Naive thymus-derived CD8-positive, alpha-beta T cell (primary cell): ENCODE measurements at regions of chr12 and their contacts with region 1.

Region 1: GRCh38 chr12:751192-751998 is 984 bp upstream of the WNK1 start:
- DNase-seq: peak; percentile 63 to 86 (median 76)
- ATAC-seq: peak; percentile 39 to 42
- H3K4me3 Mint-ChIP-seq: no peak overlapping the region
- H3K27ac Mint-ChIP-seq: no peak overlapping the region
- H3K4me1 Mint-ChIP-seq: peaks cover 12 to 33% (median 25%) of the 10 kb centered on the region in 4 donors
- H3K27me3 Mint-ChIP-seq: no peaks in the 10 kb centered on the region

Region 2: GRCh38 chr12:563250-563781 is 188.1 kb before region 1 on chr12:
- POLR2A ChIA-PET with region 1: interaction called, 18 read pairs
- DNase-seq: peak in 9 of 10 donors; percentile 42 to 86 (median 65)
- ATAC-seq: peak; percentile 89 to 90
- H3K4me3 Mint-ChIP-seq: peak overlapping the region; percentile 75 to 95 (median 84)
- H3K27ac Mint-ChIP-seq: peak overlapping the region; percentile 94 to 99 (median 96)
- H3K4me1 Mint-ChIP-seq: peaks cover 48 to 94% (median 82%) of the 10 kb centered on the region in 4 donors
- H3K27me3 Mint-ChIP-seq: no peaks in the 10 kb centered on the region

Region 3: DNA sequence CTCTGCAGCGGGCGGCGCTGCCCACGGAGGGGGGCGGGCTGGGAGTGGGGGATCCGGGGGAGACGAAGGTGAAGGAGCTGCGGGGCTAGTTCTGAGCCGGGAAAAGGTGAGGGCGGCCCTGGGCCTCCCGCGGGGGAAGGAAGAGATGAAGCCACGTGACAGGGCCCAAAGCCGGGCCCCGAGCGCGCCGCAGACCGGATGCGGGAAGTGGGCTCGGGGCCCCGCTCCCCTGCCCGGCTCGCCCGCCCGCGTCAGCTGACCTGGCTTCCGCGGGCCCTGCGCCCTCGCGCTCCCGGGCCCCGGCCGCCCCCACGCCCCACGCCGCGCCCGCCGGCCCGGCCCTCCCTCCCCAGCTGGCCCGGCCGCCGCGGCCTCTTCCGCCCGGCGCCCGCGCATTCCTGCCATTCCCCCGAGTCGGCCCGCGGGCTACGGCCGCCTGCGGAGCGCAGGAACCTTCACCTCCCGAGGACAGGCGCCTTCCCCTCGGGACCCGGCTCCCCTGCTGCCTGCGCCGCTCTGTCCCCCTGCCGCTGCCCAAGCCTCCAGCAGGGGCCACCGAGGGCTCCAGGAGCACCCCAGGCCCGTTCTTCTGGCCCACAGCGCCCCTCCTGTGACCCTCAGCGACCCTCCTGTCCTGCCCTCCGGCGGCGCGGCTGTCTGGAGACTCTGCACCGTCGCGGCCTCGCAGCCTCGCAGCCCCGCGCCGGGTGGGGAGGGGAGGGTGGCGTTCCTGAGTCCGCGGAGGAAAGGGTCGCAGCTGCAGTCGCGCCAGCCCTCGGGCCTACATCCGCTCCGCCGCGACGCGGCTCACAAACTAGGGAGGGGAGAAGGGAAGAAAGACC is 108.5 kb before region 1 on chr12:
- POLR2A ChIA-PET with region 1: interaction called, 53 read pairs
- DNase-seq: peak; percentile 52 to 84 (median 72)
- ATAC-seq: peak; percentile 81 to 84
- H3K4me3 Mint-ChIP-seq: peak overlapping the region; percentile 73 to 92 (median 84)
- H3K27ac Mint-ChIP-seq: peak overlapping the region; percentile 90 to 98 (median 94)
- H3K4me1 Mint-ChIP-seq: peaks cover 24 to 72% (median 59%) of the 10 kb centered on the region in 4 donors
- H3K27me3 Mint-ChIP-seq: no peaks in the 10 kb centered on the region

Region 4: GRCh38 chr12:718756-719102 is 32.7 kb before region 1 on chr12:
- POLR2A ChIA-PET with region 1: interaction called, 15 read pairs
- DNase-seq: no peak
- ATAC-seq: no peak
- H3K4me3 Mint-ChIP-seq: peak overlapping the region in 9 of 10 donors; percentile 5 to 74 (median 59)
- H3K27ac Mint-ChIP-seq: peak overlapping the region in 8 of 10 donors; percentile 49 to 87 (median 74)
- H3K4me1 Mint-ChIP-seq: peaks cover 20 to 57% (median 39%) of the 10 kb centered on the region in 4 donors
- H3K27me3 Mint-ChIP-seq: no peaks in the 10 kb centered on the region

Region 5: GRCh38 chr12:737122-737739 is 14.2 kb before region 1 on chr12:
- POLR2A ChIA-PET with region 1: interaction called, 21 read pairs
- DNase-seq: no peak
- ATAC-seq: no peak
- H3K4me3 Mint-ChIP-seq: no peak overlapping the region
- H3K27ac Mint-ChIP-seq: no peak overlapping the region
- H3K4me1 Mint-ChIP-seq: peaks cover 0 to 8% (median 3%) of the 10 kb centered on the region in 4 donors
- H3K27me3 Mint-ChIP-seq: no peaks in the 10 kb centered on the region

Region 6: DNA sequence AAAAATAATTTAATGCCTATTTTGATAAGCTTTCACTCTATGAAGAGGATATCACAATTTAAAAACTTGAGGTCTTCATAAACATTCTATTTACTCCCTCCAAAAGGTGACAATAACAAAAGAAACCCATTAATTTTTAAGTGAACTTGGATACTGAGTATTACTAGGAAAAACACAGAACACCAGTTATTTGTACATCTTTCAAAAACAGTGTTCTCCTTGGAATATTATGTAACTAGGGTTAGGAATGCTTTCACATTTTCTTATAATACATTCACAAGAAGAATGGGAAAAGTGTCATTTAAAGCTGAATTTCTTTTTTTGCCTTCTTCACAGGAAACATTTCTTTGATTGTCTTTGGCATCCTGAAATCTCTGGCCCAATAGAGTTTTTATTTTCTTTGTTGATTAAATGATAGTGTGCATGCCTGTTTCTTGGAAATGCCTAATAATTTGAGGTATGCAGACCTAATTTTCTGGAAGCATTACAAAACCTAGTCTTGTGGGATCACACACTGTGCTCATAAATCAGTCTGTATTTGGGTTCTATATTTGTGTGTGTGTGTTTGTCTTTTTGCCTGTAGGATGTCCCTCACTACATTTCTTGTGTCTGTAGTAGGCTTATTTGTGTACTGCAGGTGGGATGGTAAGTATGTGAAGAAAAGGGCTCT is 77.5 kb after region 1 on chr12:
- POLR2A ChIA-PET with region 1: no interaction called
- DNase-seq: no peak
- ATAC-seq: no peak
- H3K4me3 Mint-ChIP-seq: no peak overlapping the region
- H3K27ac Mint-ChIP-seq: peak overlapping the region in 2 of 10 donors; percentile 35 to 53
- H3K4me1 Mint-ChIP-seq: peaks cover 9 to 28% (median 23%) of the 10 kb centered on the region in 4 donors
- H3K27me3 Mint-ChIP-seq: no peaks in the 10 kb centered on the region

Region 7: DNA sequence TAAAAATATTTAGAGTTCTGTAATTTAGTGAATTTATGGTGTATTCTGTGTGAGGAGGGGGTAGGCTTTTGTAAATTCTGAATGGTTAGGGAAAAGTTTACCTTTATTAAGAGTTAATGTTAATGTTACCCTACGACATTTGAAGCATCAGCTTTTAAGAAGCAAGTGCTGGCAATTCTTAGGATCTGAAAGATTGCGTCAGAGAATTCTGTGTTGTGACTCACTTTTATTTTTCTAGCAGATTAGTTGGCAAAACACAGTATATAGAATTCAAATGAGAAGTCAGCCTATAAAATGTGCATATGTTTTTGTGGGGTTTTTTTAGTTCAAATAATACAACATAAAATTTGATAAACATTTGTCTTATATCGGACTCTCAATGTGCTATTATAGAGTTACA is 100.5 kb after region 1 on chr12:
- POLR2A ChIA-PET with region 1: no interaction called
- DNase-seq: no peak
- ATAC-seq: no peak
- H3K4me3 Mint-ChIP-seq: no peak overlapping the region
- H3K27ac Mint-ChIP-seq: peak overlapping the region in 4 of 10 donors; percentile 23 to 74 (median 30)
- H3K4me1 Mint-ChIP-seq: peaks cover 16 to 51% (median 43%) of the 10 kb centered on the region in 4 donors
- H3K27me3 Mint-ChIP-seq: no peaks in the 10 kb centered on the region